Activated CD4-positive, alpha-beta memory T cell treated with anti-CD3 and anti-CD28 coated beads for 36 hours (primary cell): ENCODE measurements at regions of chr5 and their contacts with region 1.

Region 1: DNA sequence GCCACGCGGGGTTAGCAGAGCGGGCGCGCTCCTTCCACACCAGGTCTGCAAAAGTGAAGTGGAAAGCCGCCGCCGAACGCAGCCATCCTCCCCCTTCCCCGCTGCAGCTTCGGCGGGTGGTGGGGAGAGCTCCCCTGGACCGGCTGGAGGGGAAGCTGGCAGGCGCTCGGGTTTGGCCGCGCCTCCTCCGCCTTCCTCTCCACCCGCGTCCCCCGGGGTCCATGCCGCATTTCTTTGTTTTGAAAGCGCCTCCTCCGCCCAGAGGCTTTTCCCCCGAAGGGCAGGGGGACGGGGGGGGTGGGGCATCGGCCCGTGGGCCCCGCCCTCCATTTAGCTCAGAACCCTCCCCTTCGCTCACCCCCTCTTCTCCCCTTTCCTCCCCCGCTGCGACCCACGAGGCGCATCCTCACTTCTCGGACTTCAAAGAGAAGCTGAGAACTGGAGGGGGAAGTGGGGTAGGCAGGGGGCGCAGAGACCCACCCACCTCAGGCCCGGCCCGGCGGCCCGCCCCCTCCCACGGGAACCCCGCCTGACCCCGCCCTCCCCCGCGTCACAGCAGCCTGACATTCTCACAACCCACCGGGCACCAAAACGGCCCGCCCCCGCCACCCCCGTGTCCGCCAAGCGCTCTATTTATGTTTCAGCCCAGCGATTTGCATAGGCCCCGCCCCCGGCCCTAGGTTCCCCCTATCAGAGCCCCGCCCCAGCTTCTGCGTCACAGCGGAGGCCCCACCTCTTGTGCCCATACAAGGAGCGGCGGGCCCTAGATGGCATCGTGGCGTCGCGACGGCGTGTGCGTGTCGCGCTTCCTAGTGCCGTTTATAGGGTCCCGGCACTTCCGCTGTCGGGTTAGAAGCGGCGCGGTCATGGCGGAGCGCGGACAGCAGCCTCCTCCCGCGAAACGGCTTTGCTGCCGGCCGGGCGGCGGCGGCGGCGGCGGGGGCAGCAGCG is at the start of gene ZSWIM6:
- DNase-seq: peak; percentile 98
- H3K4me3 Mint-ChIP-seq: peak within 1 kb of the TSS; percentile 84
- H3K27ac Mint-ChIP-seq: peak within 1 kb of the TSS; percentile 87
- H3K4me1 Mint-ChIP-seq: peaks cover 43% of the 10 kb centered on the region
- H3K27me3 Mint-ChIP-seq: peaks cover 17% of the 10 kb centered on the region
- total RNA-seq, gene ZSWIM6: 5.5 to 5.7 TPM

Region 2: GRCh38 chr5:60633341-60633740 is 698.3 kb before region 1 on chr5:
- CTCF ChIA-PET with region 1: no interaction called
- POLR2A ChIA-PET with region 1: no interaction called
- intact Hi-C with region 1: no loop called
- DNase-seq: no peak
- H3K4me3 Mint-ChIP-seq: no peak overlapping the region
- H3K27ac Mint-ChIP-seq: no peak overlapping the region
- H3K4me1 Mint-ChIP-seq: no peaks in the 10 kb centered on the region
- H3K27me3 Mint-ChIP-seq: no peaks in the 10 kb centered on the region

Region 3: GRCh38 chr5:60972231-60972630 is 359.5 kb before region 1 on chr5:
- CTCF ChIA-PET with region 1: no interaction called
- POLR2A ChIA-PET with region 1: no interaction called
- intact Hi-C with region 1: loop called (anchors 2 kb)
- DNase-seq: peak; percentile 73
- H3K4me3 Mint-ChIP-seq: no peak overlapping the region
- H3K27ac Mint-ChIP-seq: no peak overlapping the region
- H3K4me1 Mint-ChIP-seq: peaks cover 14% of the 10 kb centered on the region
- H3K27me3 Mint-ChIP-seq: no peaks in the 10 kb centered on the region

Region 4: DNA sequence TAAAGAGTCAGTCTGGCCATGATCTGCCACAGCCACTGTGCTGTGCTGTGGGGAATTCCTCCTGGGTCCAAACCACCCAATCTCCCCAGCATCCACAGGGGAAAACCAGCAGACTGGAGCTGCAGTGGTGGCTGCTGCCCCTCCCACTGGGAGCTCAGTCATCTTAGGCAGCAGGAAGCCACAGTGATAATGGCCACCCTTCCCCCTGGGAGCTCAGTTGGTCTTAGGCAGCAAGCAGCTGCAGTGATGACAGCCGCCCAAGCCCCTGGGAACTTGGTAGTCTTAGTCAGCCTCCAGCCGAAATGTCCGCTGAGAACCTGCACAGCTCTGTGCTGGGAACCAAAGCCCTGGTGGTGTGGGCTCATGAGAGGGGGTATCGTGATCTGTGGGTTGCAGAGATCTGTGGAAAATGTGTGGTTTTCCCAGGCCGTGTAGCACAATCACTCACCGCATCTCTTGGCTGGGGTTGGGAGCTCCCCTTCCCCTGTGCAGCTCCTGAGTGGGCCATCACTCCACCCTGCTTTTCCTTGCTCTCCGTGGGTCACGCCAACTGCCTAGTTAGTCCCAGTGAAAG is 131.0 kb before region 1 on chr5:
- CTCF ChIA-PET with region 1: interaction called, 3 read pairs
- POLR2A ChIA-PET with region 1: no interaction called
- intact Hi-C with region 1: loop called (anchors 1 kb)
- DNase-seq: peak; percentile 10
- H3K4me3 Mint-ChIP-seq: no peak overlapping the region
- H3K27ac Mint-ChIP-seq: no peak overlapping the region
- H3K4me1 Mint-ChIP-seq: peaks cover 16% of the 10 kb centered on the region
- H3K27me3 Mint-ChIP-seq: peaks cover 41% of the 10 kb centered on the region

Region 5: GRCh38 chr5:61408476-61409168 is 76.9 kb after region 1 on chr5:
- CTCF ChIA-PET with region 1: interaction called, 3 read pairs
- POLR2A ChIA-PET with region 1: interaction called, 12 read pairs
- intact Hi-C with region 1: loop called (anchors 1 kb)
- DNase-seq: peak; percentile 98
- H3K4me3 Mint-ChIP-seq: peak overlapping the region; percentile 55
- H3K27ac Mint-ChIP-seq: peak overlapping the region; percentile 50
- H3K4me1 Mint-ChIP-seq: peaks cover 29% of the 10 kb centered on the region
- H3K27me3 Mint-ChIP-seq: no peaks in the 10 kb centered on the region

Region 6: GRCh38 chr5:61467766-61468482 is 136.2 kb after region 1 on chr5:
- CTCF ChIA-PET with region 1: no interaction called
- POLR2A ChIA-PET with region 1: no interaction called
- intact Hi-C with region 1: no loop called
- DNase-seq: no peak
- H3K4me3 Mint-ChIP-seq: no peak overlapping the region
- H3K27ac Mint-ChIP-seq: no peak overlapping the region
- H3K4me1 Mint-ChIP-seq: peaks cover 17% of the 10 kb centered on the region
- H3K27me3 Mint-ChIP-seq: no peaks in the 10 kb centered on the region

Region 7: GRCh38 chr5:61625681-61626621 is 294.3 kb after region 1 on chr5:
- CTCF ChIA-PET with region 1: no interaction called
- POLR2A ChIA-PET with region 1: no interaction called
- intact Hi-C with region 1: loop called (anchors 2 kb)
- DNase-seq: peak; percentile 59
- H3K4me3 Mint-ChIP-seq: peak overlapping the region; percentile 45
- H3K27ac Mint-ChIP-seq: no peak overlapping the region
- H3K4me1 Mint-ChIP-seq: no peaks in the 10 kb centered on the region
- H3K27me3 Mint-ChIP-seq: peaks cover 39% of the 10 kb centered on the region

Region 8: GRCh38 chr5:62305715-62306322 is 974.1 kb after region 1 on chr5 and contains the start of gene KIF2A:
- CTCF ChIA-PET with region 1: no interaction called
- POLR2A ChIA-PET with region 1: no interaction called
- intact Hi-C with region 1: loop called (anchors 5 kb)
- DNase-seq: peak; percentile 96
- H3K4me3 Mint-ChIP-seq: peak within 1 kb of the TSS; percentile 98
- H3K27ac Mint-ChIP-seq: peak within 1 kb of the TSS; percentile 98
- H3K4me1 Mint-ChIP-seq: peaks cover 48% of the 10 kb centered on the region
- H3K27me3 Mint-ChIP-seq: no peaks in the 10 kb centered on the region
- total RNA-seq, gene KIF2A: 209 TPM